Activated CD4-positive, alpha-beta T cell treated with anti-CD3 and anti-CD28 coated beads, Interleukin-2, amount 10 ng/mL, durations not matched to agents 24 days and 14 days (primary cell): ENCODE measurements at regions of chr1 and their contacts with region 1.

Region 1: DNA sequence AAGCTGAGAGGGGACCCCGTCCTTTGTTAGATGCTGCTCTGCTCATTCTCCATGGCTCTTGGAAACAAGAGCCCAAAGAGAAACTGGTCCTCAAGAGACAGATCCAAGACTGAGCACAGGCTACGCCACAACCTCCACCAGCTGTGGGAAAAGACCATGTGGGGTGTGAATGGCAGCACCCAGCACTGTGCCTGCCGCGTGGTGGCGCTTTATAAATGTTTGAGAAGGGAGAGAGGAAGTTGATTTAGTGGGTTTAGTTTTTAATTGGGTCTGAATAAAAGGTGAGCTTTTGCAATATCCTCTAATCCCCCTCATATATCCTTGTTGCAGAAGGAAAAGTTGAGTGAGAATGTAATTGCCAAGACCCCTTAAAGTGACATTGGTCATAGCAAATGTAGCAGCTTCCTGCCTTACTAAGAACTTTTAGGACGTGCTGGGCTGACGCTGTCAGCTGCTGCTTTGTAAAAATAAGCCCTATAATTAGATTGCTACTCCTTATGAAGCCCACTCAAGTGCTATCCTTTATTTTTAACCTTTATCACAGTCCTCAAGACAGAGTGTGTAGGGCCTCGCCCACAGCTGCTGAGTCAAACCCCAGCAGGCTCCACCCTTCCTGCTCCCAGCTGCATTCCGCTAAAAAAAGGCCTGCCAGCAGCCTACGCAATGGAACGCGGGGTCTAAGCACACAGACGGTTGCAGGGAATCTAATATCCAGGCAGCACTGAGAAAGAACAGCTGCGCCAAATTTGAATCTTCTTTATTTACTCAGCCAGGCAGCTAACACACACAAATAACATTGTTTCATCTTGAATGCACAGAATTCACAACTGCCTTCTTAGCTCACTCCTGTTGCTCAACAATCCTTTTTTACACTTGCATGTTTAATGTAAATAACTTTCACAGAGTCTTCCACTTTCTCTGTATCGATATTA is 47.4 kb upstream of the PRDX6 start:
- DNase-seq: peak; percentile 88
- H3K4me3 Mint-ChIP-seq: peak overlapping the region; percentile 74
- H3K27ac Mint-ChIP-seq: peak overlapping the region; percentile 66
- H3K4me1 Mint-ChIP-seq: peaks cover 18% of the 10 kb centered on the region
- H3K27me3 Mint-ChIP-seq: no peaks in the 10 kb centered on the region

Region 2: DNA sequence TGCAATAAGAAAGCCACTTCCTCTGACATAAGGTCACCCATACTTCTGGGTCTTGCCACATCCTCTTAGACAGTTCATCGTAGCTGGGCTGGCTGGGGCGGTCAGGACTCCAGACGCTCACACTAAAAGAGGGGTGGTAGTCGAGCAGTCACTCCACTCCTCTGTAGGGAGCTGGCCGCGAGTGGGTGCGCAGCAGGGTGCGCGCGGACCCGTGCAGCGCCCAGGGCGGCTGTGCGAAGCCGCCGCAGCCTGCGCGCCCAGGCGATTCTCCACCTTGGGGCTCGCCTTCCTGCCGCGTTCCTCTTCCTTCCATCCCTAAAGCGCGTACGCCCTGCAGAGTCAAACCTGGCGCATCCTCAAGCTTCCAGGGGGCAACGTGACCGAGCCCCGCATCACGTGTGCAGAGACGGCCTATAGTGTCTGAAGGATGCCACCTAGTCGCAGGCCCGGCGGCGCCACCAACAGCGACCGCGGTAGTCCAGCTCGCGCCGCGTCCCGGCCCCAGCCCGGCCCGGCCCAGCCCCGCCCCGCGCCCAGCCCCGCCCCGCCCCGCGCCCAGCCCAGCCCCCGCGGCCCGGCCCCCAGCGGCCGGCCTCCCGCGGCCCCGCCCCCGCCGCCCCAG is 47.0 kb after region 1 on chr1:
- intact Hi-C with region 1: loop called (anchors 1 kb)
- DNase-seq: peak; percentile 92
- H3K4me3 Mint-ChIP-seq: peak overlapping the region; percentile 92
- H3K27ac Mint-ChIP-seq: peak overlapping the region; percentile 96
- H3K4me1 Mint-ChIP-seq: peaks cover 48% of the 10 kb centered on the region
- H3K27me3 Mint-ChIP-seq: no peaks in the 10 kb centered on the region

Region 3: DNA sequence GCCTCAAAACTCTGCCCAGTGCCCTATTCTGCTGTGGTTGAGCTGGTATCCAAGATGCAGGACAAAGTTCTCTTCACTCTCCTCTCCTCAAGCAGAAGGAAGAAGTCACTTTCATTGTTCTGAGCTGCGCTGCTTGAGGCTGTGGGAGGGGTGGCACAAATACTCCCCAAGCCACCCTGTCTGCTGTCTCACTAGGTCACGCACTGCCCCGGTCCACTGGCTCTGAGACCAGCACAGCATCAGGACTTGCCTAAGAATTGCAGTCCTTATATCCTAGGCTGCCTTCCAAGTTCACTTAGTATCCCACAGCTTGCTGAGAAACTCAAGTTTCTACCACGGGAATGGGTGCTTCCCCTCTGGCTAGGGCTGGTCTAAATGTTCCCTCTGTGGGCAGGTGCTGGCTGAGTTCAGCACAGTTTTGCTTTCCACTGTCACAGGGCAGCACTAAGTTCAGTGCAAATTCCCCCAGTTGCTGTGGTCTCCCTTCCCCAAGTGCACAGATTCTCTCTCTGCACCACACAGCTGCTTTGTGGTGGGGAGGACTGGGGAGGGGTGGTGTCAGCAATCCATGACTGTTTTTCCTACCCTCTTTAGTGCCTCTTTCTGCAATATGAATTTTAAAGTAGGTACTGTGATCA is 140.8 kb after region 1 on chr1:
- intact Hi-C with region 1: loop called (anchors 5 kb)
- DNase-seq: no peak
- H3K4me3 Mint-ChIP-seq: no peak overlapping the region
- H3K27ac Mint-ChIP-seq: no peak overlapping the region
- H3K4me1 Mint-ChIP-seq: peaks cover 4% of the 10 kb centered on the region
- H3K27me3 Mint-ChIP-seq: peaks cover 23% of the 10 kb centered on the region

Region 4: DNA sequence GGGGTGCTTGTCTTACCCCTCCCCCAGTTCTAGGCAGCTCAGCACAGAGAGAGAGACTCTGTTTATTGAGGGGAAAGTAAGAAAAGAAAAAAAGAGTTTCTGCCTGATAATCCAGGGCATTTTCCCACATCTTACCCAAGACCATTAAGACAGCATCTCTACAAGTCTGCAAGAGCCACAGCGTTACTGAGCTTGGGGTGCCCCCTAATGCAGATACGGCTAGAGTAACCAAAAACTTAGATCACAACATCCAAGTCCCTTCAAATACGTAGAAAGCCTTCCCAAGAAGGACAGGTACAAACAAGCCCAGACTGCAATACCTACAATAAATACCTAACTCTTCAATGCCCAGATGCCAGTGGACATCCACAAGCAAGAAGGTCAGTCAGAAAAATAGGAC is 199.2 kb after region 1 on chr1:
- intact Hi-C with region 1: no loop called
- DNase-seq: peak; percentile 53
- H3K4me3 Mint-ChIP-seq: no peak overlapping the region
- H3K27ac Mint-ChIP-seq: no peak overlapping the region
- H3K4me1 Mint-ChIP-seq: no peaks in the 10 kb centered on the region
- H3K27me3 Mint-ChIP-seq: peaks cover 8% of the 10 kb centered on the region

Region 5: DNA sequence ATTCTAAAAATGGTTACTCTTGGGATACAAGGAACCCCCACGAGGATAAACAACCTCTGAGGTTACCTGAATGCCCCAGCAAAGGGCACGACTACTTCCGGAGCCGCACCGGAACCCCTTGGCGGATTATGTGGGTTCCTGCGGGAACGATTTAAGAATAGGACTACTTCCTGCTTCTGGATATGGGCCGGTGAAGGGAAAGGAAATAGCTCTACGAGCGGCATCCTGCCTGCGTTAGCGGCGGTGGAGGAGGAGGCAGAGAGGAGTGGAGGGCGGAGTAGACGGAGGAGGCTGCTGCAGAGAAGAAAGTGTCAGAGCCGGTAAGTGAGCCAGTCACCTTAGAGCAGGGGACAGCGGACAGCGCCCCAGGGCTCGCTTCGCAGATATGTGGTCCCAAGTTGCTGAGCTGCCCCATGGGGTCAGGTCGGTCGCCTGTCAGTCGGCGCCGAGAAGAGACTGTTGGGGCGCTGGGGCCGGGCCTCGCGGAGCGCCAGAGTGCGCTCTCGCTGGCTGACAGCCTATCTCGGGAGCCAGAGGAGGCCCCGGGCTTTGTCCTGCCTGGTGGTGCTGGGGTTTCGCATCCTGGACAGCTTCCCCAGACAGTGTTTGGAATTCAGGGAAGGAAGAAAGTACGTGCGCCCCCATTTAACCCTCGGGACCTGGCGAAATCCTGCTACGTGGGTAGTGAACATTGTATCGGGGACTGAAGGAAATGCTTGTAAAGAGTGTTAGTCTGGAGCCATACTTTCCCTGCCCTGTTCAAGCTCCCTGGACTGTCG is 285.2 kb after region 1 on chr1 and contains the start of gene KLHL20:
- intact Hi-C with region 1: loop called (anchors 1 kb)
- DNase-seq: peak; percentile 96
- H3K4me3 Mint-ChIP-seq: peak within 1 kb of the TSS; percentile 96
- H3K27ac Mint-ChIP-seq: peak within 1 kb of the TSS; percentile 95
- H3K4me1 Mint-ChIP-seq: peaks cover 18% of the 10 kb centered on the region
- H3K27me3 Mint-ChIP-seq: peaks cover 23% of the 10 kb centered on the region
- total RNA-seq, gene KLHL20: 15.4 and 17.1 TPM in 2 replicates

Region 6: DNA sequence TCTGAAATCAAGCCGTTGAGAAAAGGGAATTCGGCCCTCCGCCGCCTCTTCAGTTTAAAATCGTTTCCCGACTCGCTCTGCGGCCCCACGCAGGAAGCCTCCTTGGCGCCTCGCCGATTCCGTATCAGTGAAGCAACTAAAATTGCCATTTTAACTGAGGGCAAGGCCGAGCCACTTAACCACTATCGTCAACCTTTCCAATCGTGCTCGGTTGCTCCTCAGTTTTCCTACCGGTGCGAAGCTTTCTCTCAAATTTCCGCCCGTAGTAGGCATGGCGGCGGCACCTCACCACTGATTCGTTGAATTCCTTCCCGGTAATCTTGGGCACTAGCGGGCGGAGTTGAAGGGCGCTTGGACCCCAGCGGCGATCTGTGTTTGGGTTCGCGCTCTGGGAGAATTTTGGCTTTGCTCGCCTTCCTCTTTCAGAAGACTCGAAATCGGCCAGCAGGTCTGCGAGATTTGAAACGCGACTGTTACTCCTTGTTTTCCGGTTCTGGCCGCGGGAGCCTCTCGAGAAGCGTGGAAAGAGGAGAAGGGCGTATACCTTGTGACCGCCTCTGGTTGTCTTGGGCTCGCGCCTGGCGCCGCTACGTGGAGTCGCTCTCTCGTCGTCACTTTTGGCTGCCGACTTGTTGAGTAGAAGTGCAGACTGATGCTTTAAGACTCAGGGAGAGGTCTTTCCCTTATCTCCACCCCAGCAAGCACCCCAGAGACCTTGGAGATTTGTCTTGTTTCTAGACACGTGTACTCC is 394.8 kb after region 1 on chr1 and contains the starts of genes CENPL and DARS2:
- intact Hi-C with region 1: loop called (anchors 1 kb)
- DNase-seq: peak; percentile 97
- H3K4me3 Mint-ChIP-seq: peak within 1 kb of the TSS; percentile 99
- H3K27ac Mint-ChIP-seq: peak within 1 kb of the TSS; percentile 98
- H3K4me1 Mint-ChIP-seq: peaks cover 49% of the 10 kb centered on the region
- H3K27me3 Mint-ChIP-seq: no peaks in the 10 kb centered on the region
- total RNA-seq, gene CENPL: 23.2 and 24.4 TPM in 2 replicates
- total RNA-seq, gene DARS2: 47.6 and 52.2 TPM in 2 replicates

Region 7: DNA sequence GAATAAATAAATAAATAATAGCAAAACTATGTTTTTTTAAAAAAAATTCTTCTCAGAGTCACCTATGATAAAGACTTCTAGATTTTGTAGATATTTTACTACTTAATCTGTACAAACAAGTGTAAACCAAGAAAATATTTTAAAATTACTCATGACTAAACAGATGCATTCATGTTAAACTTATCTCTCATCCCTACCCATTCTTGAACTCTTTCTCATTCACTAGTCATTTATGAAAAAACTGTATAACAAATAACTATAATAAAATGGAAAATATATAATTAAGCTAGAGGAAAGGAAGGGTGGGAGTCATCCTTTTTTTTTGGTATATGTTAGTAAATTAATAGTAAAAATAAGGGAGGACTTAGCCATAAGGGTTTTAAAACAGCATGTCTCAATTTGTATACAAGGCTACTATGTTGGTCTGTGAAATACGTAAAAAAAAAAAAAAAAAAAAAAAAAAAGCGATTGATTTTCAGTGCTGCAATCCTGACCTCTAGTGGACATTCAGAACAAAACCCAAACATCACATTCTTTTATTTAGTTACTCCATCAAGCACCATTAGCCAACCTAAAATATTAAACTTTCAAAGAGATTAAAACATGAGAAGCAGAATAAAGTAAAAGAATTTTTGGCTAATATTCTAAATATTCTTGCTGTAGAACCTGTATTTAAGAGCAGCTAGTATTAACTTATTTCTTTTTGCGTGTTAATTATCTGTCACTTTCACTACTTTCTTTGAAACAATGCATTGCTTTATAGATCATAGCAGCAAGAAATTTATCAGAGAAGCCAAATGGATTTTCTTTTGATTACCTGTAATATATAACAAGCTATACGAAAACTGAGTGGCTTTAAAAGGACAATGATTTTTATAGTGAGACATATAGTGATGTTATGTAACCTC is 1314.2 kb after region 1 on chr1:
- intact Hi-C with region 1: loop called (anchors 5 kb)
- DNase-seq: no peak
- H3K4me3 Mint-ChIP-seq: no peak overlapping the region
- H3K27ac Mint-ChIP-seq: no peak overlapping the region
- H3K4me1 Mint-ChIP-seq: no peaks in the 10 kb centered on the region
- H3K27me3 Mint-ChIP-seq: peaks cover 3% of the 10 kb centered on the region